CD8-positive, alpha-beta T cell (primary cell): ENCODE measurements at regions of chr1 and their contacts with region 1.

Region 1: DNA sequence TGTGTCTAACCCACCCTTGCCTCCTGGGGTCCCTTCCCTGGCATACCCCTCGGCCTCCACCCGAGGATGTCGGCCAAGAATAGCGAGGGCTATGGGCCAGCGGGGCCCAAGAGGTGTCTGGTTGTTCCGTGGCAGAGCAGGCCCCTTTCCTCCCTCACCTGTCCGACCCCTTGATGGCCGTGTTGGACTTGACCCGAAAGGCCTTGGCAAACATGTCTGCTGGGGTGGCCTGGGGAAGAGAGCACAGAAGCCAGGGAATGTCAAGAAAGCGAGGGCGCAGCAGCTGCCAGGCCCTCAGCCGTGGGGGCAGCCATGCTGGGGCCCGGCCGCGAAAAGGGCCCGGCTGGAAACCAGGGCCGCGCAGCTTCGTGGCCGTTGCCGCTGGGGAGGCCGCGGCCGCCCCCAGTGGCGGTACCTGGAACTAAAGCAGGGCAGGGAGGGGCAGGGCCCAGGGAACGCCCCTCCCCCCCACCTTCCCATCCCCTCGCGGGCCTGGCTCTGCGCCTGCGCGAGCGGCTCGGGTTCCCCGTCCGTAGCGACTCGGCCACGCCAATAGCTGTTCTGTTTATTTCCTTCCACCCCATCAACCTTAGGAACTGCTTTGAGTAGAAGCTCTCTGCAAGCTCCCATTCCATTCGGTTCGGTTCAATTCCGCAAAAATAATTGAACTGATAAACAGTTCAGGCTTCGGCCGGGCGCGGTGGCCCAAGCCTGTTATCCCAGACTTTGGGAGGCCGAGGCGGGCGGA is at the start of gene EIF2D:
- DNase-seq: peak; percentile 89 to 96 (median 94)
- ATAC-seq: peak; percentile 99
- H3K4me3 ChIP-seq: peak within 1 kb of the TSS; percentile 90 to 91
- H3K4me3 Mint-ChIP-seq: peak within 1 kb of the TSS; percentile 92
- H3K27ac ChIP-seq: peak within 1 kb of the TSS; percentile 84 to 86
- H3K27ac Mint-ChIP-seq: peak within 1 kb of the TSS; percentile 96
- H3K4me1 ChIP-seq: peaks cover 9% of the 10 kb centered on the region
- H3K4me1 Mint-ChIP-seq: peaks cover 17% of the 10 kb centered on the region
- H3K27me3 ChIP-seq: no peaks in the 10 kb centered on the region
- H3K27me3 Mint-ChIP-seq: no peaks in the 10 kb centered on the region
- CTCF ChIP-seq: peak; percentile 91
- total RNA-seq, gene EIF2D: 42.0 to 49.2 TPM

Region 2: GRCh38 chr1:205121660-205122488 is 1490.4 kb before region 1 on chr1 and contains the start of gene RBBP5:
- CTCF ChIA-PET with region 1: no interaction called
- POLR2A ChIA-PET with region 1: no interaction called
- intact Hi-C with region 1: loop called in 1 of 2 experiments (anchors 5 kb)
- DNase-seq: peak; percentile 92 to 98 (median 95)
- ATAC-seq: peak; percentile 93
- H3K4me3 ChIP-seq: peak within 1 kb of the TSS; percentile 91 to 95
- H3K4me3 Mint-ChIP-seq: peak within 1 kb of the TSS; percentile 96
- H3K27ac ChIP-seq: peak within 1 kb of the TSS; percentile 88 to 97
- H3K27ac Mint-ChIP-seq: peak within 1 kb of the TSS; percentile 100
- H3K4me1 ChIP-seq: peaks cover 26% of the 10 kb centered on the region
- H3K4me1 Mint-ChIP-seq: peaks cover 46% of the 10 kb centered on the region
- H3K27me3 ChIP-seq: no peaks in the 10 kb centered on the region
- H3K27me3 Mint-ChIP-seq: no peaks in the 10 kb centered on the region
- CTCF ChIP-seq: peak; percentile 59
- total RNA-seq, gene RBBP5: 23.9 to 25.7 TPM

Region 3: GRCh38 chr1:206544562-206545257 is 67.6 kb before region 1 on chr1:
- CTCF ChIA-PET with region 1: interaction called, 22 read pairs
- POLR2A ChIA-PET with region 1: no interaction called
- intact Hi-C with region 1: loop called in 1 of 2 experiments (anchors 1 kb)
- DNase-seq: peak; percentile 71 to 93 (median 82)
- ATAC-seq: peak; percentile 95
- H3K4me3 ChIP-seq: no peak overlapping the region
- H3K4me3 Mint-ChIP-seq: no peak overlapping the region
- H3K27ac ChIP-seq: no peak overlapping the region
- H3K27ac Mint-ChIP-seq: no peak overlapping the region
- H3K4me1 ChIP-seq: peaks cover 9% of the 10 kb centered on the region
- H3K4me1 Mint-ChIP-seq: peaks cover 16% of the 10 kb centered on the region
- H3K27me3 ChIP-seq: no peaks in the 10 kb centered on the region
- H3K27me3 Mint-ChIP-seq: no peaks in the 10 kb centered on the region
- CTCF ChIP-seq: peak; percentile 95

Region 4: GRCh38 chr1:206563367-206564207 is 48.7 kb before region 1 on chr1:
- CTCF ChIA-PET with region 1: interaction called, 4 read pairs
- POLR2A ChIA-PET with region 1: no interaction called
- intact Hi-C with region 1: loop called in 1 of 2 experiments (anchors 1 kb)
- DNase-seq: no peak
- ATAC-seq: peak; percentile 8
- H3K4me3 ChIP-seq: peak overlapping the region; percentile 0 to 40
- H3K4me3 Mint-ChIP-seq: peak overlapping the region; percentile 83
- H3K27ac ChIP-seq: peak overlapping the region; percentile 17 to 56
- H3K27ac Mint-ChIP-seq: peak overlapping the region; percentile 95
- H3K4me1 ChIP-seq: peaks cover 90% of the 10 kb centered on the region
- H3K4me1 Mint-ChIP-seq: peaks cover 95% of the 10 kb centered on the region
- H3K27me3 ChIP-seq: no peaks in the 10 kb centered on the region
- H3K27me3 Mint-ChIP-seq: no peaks in the 10 kb centered on the region
- CTCF ChIP-seq: no peak

Region 5: DNA sequence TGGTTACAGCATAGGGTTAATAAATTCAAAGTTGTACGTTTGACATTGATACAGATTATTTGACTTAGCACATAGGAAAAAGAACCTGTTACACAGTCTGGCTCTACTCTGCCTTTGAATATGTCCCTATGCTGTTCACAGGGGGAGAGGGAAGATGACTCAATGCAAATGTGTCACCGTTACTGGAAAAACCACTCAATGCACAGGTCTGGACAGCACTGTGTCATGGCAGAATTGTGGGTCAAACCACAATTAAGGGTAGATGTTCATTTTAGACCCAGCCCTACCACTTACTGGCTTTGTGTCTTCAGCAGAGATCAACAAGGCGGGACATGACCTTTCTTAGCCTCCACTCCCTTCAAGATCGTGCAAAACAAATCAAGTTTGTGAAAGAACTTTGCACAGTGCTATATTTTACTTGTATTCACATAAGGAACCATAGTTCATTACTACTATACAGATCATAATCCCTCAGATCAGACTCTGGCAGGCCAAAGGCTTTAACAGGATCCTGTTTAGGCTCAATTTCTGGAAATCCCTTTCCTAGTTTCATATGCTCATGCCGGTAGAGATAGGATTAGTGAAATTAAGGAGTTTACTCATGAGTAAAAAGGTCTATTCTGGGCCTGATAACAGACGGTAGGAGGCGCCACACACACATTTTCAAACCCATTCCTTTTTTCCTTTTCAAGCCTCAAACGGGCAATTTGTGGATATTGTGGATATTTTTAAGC is 22.1 kb before region 1 on chr1:
- CTCF ChIA-PET with region 1: interaction called, 11 read pairs
- POLR2A ChIA-PET with region 1: no interaction called
- intact Hi-C with region 1: no loop called
- DNase-seq: peak in 6 of 9 experiments; percentile 50 to 78 (median 59)
- ATAC-seq: peak; percentile 87
- H3K4me3 ChIP-seq: no peak overlapping the region
- H3K4me3 Mint-ChIP-seq: peak overlapping the region; percentile 16
- H3K27ac ChIP-seq: peak overlapping the region in 1 of 2 experiments; percentile 44
- H3K27ac Mint-ChIP-seq: peak overlapping the region; percentile 91
- H3K4me1 ChIP-seq: peaks cover 20% of the 10 kb centered on the region
- H3K4me1 Mint-ChIP-seq: peaks cover 46% of the 10 kb centered on the region
- H3K27me3 ChIP-seq: no peaks in the 10 kb centered on the region
- H3K27me3 Mint-ChIP-seq: no peaks in the 10 kb centered on the region
- CTCF ChIP-seq: peak; percentile 50

Region 6: GRCh38 chr1:206684478-206685333 is 72.4 kb after region 1 on chr1 and contains the start of gene MAPKAPK2:
- CTCF ChIA-PET with region 1: interaction called, 3 read pairs
- POLR2A ChIA-PET with region 1: interaction called, 4 read pairs
- intact Hi-C with region 1: loop called (anchors 1 kb)
- DNase-seq: peak; percentile 62 to 88 (median 76)
- ATAC-seq: peak; percentile 74
- H3K4me3 ChIP-seq: peak within 1 kb of the TSS; percentile 81 to 85
- H3K4me3 Mint-ChIP-seq: peak within 1 kb of the TSS; percentile 96
- H3K27ac ChIP-seq: peak within 1 kb of the TSS; percentile 76 to 88
- H3K27ac Mint-ChIP-seq: peak within 1 kb of the TSS; percentile 97
- H3K4me1 ChIP-seq: peaks cover 23% of the 10 kb centered on the region
- H3K4me1 Mint-ChIP-seq: peaks cover 39% of the 10 kb centered on the region
- H3K27me3 ChIP-seq: no peaks in the 10 kb centered on the region
- H3K27me3 Mint-ChIP-seq: no peaks in the 10 kb centered on the region
- CTCF ChIP-seq: no peak
- total RNA-seq, gene MAPKAPK2: 218 to 225 TPM